Sigmoid colon (tissue), 7 donors: ENCODE measurements at regions of chr4 and their contacts with region 1.

Region 1: DNA sequence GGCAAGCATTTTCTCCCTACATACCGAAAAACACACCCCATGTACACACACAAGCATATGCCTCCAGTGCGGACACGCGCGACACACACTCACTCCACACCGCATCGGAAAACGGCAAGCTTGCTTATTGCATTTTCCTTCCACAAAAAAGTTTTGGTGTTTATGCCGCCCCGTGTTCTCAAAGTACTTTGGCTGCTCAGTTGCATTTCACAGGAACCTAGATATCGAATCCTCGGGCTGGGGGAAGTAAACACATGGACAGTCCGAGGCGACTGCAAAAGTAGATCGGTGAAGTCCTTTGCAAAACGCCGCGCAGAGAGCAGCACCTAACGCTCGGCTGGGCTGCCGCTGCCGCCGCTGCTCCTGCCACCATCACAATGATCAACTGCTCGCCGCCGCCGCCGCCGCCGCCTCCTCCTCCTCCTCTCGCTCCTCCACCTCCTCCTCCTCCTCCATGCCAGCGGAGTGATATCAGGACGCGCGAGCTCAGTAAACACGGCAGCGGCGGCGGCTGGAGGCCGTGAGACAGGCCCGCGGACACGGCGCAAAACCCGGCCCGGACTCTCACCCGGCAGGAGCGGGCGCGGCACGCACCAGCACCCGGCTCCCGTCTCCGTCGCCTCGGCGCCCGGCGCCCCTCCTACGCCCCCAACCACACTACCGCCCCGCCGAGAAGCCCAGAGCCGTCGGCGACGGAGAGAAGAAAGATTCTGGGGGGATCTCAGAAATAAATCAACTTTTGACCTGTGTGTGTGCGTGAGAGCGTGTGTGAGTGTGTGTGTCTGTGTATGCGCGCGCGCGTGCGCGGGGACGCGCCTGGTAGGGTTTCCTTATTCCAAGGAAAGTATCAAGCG is at the start of gene MAML3:
- DNase-seq: peak; percentile 98
- H3K4me3 ChIP-seq: peak within 1 kb of the TSS; percentile 71 to 86 (median 76)
- H3K27ac ChIP-seq: peak within 1 kb of the TSS; percentile 96 to 99 (median 98)
- H3K4me1 ChIP-seq: peaks cover 0 to 36% (median 29%) of the 10 kb centered on the region in 4 donors
- H3K27me3 ChIP-seq: no peaks in the 10 kb centered on the region
- CTCF ChIP-seq: no peak
- EP300 ChIP-seq: no peak
- POLR2A ChIP-seq: peak; percentile 61 to 84
- total RNA-seq, gene MAML3: 5.0 to 16.3 (median 7.6) TPM

Region 2: DNA sequence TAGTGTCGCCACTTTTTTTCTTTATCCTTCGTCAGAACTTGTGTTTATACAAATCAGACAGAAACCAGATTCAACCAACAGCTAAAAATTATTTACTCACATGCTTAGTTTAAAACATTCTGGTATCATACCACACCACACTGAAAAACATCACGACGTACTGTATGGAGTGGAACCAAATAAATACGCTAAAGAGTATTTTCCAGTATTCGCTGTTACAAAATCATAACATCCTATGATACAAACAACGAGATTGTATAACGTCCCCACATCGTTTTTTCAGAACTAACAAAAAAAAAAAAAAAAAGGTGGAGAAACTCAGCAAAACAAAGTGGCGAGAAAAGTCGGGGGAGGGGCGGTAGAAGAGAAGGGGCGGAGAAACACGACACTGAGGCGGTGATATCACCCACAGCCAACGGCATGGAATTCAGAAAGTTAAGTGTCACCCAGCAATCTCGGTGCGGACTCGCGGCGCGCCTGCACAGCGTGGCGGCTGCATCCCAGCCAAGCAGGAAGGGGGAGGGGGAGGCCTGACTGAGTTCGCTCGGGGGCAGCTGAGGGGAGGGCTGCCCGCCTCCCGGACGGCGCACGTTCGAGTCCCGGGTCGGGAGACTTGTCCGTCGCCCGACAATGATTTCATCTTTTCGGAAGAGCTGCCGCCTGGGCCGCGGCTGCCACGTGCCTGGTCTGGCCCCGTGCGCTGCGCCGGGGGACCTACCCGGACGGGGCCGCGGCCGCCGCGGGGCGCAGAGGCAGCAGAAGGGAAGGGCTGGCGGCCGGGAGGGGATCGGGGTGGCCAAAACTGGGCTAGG is 598.8 kb before region 1 on chr4:
- intact Hi-C with region 1: loop called (anchors 10 kb)
- DNase-seq: peak; percentile 96
- H3K4me3 ChIP-seq: peak overlapping the region; percentile 71 to 91 (median 88)
- H3K27ac ChIP-seq: peak overlapping the region; percentile 94 to 99 (median 97)
- H3K4me1 ChIP-seq: peaks cover 0 to 79% (median 70%) of the 10 kb centered on the region in 4 donors
- H3K27me3 ChIP-seq: no peaks in the 10 kb centered on the region
- CTCF ChIP-seq: no peak
- EP300 ChIP-seq: peak in 2 of 4 donors; percentile 34 to 84
- POLR2A ChIP-seq: peak; percentile 51 to 63

Region 3: DNA sequence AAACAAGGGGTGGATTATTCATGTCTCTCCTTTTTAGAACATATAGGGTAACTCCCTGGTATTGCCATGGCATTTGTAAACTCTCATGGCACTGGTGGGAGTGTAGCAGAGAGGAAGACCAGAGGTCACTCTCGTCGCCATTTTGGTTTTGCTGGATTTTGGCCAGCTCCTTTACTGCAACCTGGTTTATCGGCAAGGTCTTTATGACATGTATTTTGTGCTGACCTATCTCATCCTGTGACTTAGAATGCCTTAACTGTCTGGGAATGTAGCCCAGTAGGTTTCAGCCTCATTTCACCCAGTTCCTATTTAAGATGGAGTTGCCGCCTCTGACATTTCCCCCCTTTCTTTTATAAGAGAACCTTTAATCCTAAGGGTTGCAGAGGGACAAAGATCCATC is 442.5 kb before region 1 on chr4:
- intact Hi-C with region 1: no loop called
- DNase-seq: no peak
- H3K4me3 ChIP-seq: no peak overlapping the region
- H3K27ac ChIP-seq: peak overlapping the region in 1 of 4 donors; percentile 45
- H3K4me1 ChIP-seq: peaks cover 0 to 27% (median 20%) of the 10 kb centered on the region in 4 donors
- H3K27me3 ChIP-seq: no peaks in the 10 kb centered on the region
- CTCF ChIP-seq: no peak
- EP300 ChIP-seq: no peak
- POLR2A ChIP-seq: no peak

Region 4: DNA sequence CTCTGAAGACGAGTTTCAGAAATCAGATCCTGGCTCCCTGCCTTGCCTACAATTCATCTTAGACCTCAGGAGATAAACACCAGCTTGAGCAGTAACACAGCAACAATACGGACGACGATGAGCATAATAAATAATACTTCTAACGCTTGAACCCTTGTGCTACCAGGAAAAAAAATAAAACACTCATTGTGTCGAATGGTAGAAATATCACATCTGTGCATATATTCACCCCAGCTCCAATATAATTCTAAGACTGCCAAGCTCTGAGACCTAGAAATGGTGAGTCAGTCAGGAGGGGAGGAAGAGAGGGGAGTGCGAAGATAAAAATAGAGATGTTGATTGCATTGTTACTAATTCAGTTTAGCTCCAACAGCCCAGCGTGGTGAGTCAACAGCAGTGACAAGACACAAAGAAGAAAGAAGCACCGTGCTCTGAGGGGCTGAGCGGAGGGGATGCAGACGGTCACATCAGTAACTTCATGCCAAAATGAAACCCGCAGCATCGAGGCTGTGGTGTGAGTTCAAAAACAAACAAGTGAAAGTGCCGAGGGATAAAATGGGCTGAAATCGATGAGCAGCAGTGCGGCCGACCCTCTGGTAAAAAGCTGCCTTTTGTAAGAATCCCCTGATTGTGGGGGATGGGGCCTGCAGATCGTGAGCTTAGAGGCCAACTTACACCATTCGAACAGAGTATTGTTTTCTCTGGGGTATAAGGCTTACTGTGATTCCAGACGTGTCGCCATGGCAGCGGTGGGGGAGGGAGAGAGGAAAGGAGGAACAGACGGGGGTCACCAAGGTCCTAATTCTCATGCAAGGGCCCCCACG is 338.0 kb before region 1 on chr4:
- intact Hi-C with region 1: loop called (anchors 10 kb)
- DNase-seq: peak; percentile 85
- H3K4me3 ChIP-seq: peak overlapping the region; percentile 24 to 53 (median 48)
- H3K27ac ChIP-seq: peak overlapping the region; percentile 73 to 78 (median 76)
- H3K4me1 ChIP-seq: peaks cover 0 to 32% (median 21%) of the 10 kb centered on the region in 4 donors
- H3K27me3 ChIP-seq: no peaks in the 10 kb centered on the region
- CTCF ChIP-seq: no peak
- EP300 ChIP-seq: no peak
- POLR2A ChIP-seq: no peak

Region 5: GRCh38 chr4:140018931-140019618 is 134.9 kb before region 1 on chr4:
- intact Hi-C with region 1: loop called (anchors 5 kb)
- DNase-seq: no peak
- H3K4me3 ChIP-seq: no peak overlapping the region
- H3K27ac ChIP-seq: peak overlapping the region; percentile 23 to 69 (median 48)
- H3K4me1 ChIP-seq: peaks cover 0 to 32% (median 26%) of the 10 kb centered on the region in 4 donors
- H3K27me3 ChIP-seq: no peaks in the 10 kb centered on the region
- CTCF ChIP-seq: no peak
- EP300 ChIP-seq: no peak
- POLR2A ChIP-seq: no peak

Region 6: DNA sequence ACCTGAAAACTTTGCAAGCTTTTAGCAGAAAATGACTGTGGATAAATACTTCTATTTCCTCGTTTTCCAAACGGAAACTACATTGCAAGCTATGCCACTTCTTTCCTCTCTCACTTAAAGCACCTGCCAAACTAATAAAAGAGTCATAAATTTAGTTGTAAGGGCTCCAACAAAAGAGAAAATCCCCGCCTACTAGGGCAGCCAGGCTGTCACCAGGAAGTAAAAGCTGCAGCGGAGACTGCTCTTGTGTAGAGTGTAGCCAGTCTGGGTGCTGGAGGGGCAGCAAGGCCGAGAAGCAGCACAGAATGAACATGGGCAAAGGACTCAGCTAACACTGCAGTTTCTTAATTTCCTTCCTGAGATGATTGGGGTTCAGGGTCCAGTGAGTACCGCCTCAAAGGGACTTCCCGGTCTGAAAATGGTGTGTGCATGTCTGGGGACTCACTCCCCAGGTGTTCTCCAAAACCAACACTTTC is 89.4 kb after region 1 on chr4:
- intact Hi-C with region 1: loop called (anchors 2 kb)
- DNase-seq: no peak
- H3K4me3 ChIP-seq: no peak overlapping the region
- H3K27ac ChIP-seq: peak overlapping the region; percentile 39 to 70 (median 66)
- H3K4me1 ChIP-seq: peaks cover 0 to 34% (median 24%) of the 10 kb centered on the region in 4 donors
- H3K27me3 ChIP-seq: no peaks in the 10 kb centered on the region
- CTCF ChIP-seq: no peak
- EP300 ChIP-seq: peak in 1 of 4 donors; percentile 11
- POLR2A ChIP-seq: peak in 1 of 2 donors; percentile 36

Region 7: GRCh38 chr4:140326395-140326993 is 172.5 kb after region 1 on chr4:
- intact Hi-C with region 1: loop called (anchors 5 kb)
- DNase-seq: no peak
- H3K4me3 ChIP-seq: no peak overlapping the region
- H3K27ac ChIP-seq: no peak overlapping the region
- H3K4me1 ChIP-seq: no peaks in the 10 kb centered on the region
- H3K27me3 ChIP-seq: no peaks in the 10 kb centered on the region
- CTCF ChIP-seq: peak; percentile 61 to 68 (median 64)
- EP300 ChIP-seq: no peak
- POLR2A ChIP-seq: no peak